Psoas muscle (tissue), 8 donors: ENCODE measurements at regions of chr9 and their contacts with region 1.

Region 1: DNA sequence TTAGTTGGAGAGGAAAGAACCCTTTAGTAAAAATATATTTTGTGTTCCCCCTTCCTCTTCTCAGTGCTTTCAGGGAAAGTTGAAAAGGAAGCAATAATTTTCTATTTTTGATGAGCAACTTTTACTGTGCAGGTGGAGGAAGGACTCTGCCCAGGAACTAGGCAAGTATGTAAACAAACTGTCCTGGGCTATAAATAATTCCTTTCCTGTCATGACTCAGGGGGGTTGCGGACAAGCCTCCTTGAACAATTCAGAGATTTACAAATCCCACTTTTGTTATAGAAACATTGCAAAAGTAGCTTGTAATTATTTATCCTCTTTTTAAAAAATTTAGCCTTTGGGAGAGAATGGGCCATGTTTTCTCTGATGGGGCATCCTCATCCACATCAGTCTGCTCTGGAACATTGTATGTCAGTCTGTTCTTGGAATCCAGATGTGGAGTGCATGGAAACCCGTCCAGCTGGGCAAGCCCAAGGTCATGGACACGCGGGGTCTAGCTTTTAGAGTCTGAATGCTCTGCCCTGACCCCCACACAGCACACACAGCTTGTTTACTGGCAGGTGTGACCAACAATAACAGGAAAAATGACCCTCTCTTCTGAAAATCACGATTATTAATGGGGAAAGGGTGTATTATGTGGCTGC is 127.6 kb downstream of the GADD45G start:
- DNase-seq: no peak
- ATAC-seq: peak; percentile 70 to 87 (median 74)
- H3K4me3 ChIP-seq: no peak overlapping the region
- H3K27ac ChIP-seq: no peak overlapping the region
- H3K4me1 ChIP-seq: peaks cover 22% of the 10 kb centered on the region
- H3K27me3 ChIP-seq: no peaks in the 10 kb centered on the region
- CTCF ChIP-seq: no peak

Region 2: GRCh38 chr9:89623925-89624420 is 108.4 kb before region 1 on chr9:
- intact Hi-C with region 1: loop called in 1 of 2 experiments (anchors 5 kb)
- DNase-seq: peak in 1 of 2 donors; percentile 81
- ATAC-seq: peak; percentile 29 to 70 (median 52)
- H3K4me3 ChIP-seq: peak overlapping the region; percentile 39
- H3K27ac ChIP-seq: peak overlapping the region; percentile 75
- H3K4me1 ChIP-seq: peaks cover 43% of the 10 kb centered on the region
- H3K27me3 ChIP-seq: no peaks in the 10 kb centered on the region
- CTCF ChIP-seq: no peak

Region 3: GRCh38 chr9:89686095-89686494 is 46.3 kb before region 1 on chr9:
- intact Hi-C with region 1: loop called in 1 of 2 experiments (anchors 5 kb)
- DNase-seq: no peak
- ATAC-seq: peak in 1 of 4 donors; percentile 64
- H3K4me3 ChIP-seq: no peak overlapping the region
- H3K27ac ChIP-seq: no peak overlapping the region
- H3K4me1 ChIP-seq: peaks cover 14% of the 10 kb centered on the region
- H3K27me3 ChIP-seq: no peaks in the 10 kb centered on the region
- CTCF ChIP-seq: no peak